ENCODE measurements at regions of chr2 and their contacts with region 1.

Region 1: GRCh38 chr2:219642465-219643080 is 15.1 kb downstream of the SLC4A3 start:
- DNase-seq: peak; percentile 92 to 94
- ATAC-seq: peak; percentile 84 to 86
- H3K4me3 ChIP-seq: no peak overlapping the region
- H3K27ac ChIP-seq: no peak overlapping the region
- H3K4me1 ChIP-seq: peaks cover 27 to 40% of the 10 kb centered on the region in 2 donors
- H3K27me3 ChIP-seq: no peaks in the 10 kb centered on the region
- CTCF ChIP-seq: peak; percentile 96 to 100 (median 99)
- POLR2A ChIP-seq: no peak

Region 2: DNA sequence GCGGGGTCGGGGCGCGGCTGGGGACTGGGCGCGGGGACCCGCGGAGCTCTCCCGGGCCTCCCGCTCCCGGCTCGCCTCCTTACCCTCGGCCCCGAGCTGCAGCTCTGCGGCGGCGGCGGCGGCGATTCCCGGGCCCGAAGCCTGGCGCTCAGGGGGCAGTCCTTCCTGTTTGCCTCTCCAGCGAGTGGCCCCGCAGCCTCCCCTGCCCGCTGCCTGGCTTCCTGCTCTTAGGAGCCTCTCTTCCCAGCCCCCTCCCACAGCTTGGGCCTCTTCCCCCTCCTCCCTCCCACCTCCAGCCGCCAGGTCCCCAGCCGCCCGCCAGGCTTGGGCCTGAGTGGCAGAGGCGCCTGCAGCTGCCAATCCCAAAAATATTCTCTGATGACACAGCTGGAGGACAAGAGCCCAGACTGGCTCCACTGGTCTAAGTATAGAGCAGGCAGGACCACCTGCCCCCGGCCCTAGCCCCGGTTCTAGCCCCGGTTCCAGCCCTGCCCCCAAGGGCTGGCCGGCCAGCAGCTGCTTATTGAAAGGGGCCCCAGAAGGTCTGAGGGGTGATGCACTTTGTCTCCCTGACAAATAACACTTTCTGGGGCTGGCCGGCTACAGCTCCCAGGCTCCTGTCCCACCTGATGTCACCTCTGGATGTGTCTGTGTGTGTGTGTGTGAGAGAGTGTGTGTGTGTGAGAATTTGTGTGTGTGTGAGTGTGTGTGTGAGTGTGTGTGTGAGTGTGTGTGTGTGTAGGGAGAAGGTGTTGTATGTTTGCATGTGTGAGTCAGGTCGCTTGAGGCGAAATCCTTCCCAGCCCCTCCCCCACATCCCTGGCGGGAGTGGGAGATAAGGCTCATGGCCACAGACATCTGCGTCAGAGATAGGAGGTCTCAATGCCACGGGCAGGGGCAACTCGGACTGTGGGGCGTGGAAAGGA is 71.0 kb before region 1 on chr2 and contains the start of gene OBSL1:
- in situ Hi-C with region 1: no loop called
- intact Hi-C with region 1: loop called (anchors 1 kb)
- DNase-seq: peak; percentile 69 to 89
- ATAC-seq: peak; percentile 80
- H3K4me3 ChIP-seq: peak within 1 kb of the TSS; percentile 56 to 73 (median 63)
- H3K27ac ChIP-seq: peak within 1 kb of the TSS; percentile 79 to 90 (median 86)
- H3K4me1 ChIP-seq: peaks cover 11 to 14% of the 10 kb centered on the region in 2 donors
- H3K27me3 ChIP-seq: no peaks in the 10 kb centered on the region
- CTCF ChIP-seq: no peak
- POLR2A ChIP-seq: peak; percentile 24 to 70
- total RNA-seq, gene OBSL1: 47.9 to 72.9 (median 56.5) TPM

Region 3: DNA sequence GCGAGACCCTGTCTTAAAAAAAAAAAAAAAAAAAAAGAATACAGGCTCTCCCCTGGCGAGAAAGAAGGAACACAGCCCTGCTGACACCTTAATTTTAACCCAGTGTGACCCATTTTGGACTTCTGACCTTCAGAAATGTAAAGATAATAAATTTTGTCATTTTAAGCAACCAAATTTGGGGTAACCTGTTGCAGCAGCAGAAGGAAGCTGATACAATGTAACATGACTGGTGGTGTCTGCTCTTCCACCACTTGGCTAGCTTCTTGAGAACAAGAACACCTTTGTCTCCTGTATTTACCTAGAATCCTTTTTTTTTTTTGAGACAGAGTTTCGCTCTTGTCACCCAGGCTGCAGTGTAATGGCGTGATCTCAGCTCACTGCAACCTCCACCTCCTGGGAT is 51.5 kb before region 1 on chr2:
- in situ Hi-C with region 1: no loop called
- intact Hi-C with region 1: no loop called
- DNase-seq: no peak
- ATAC-seq: no peak
- H3K4me3 ChIP-seq: no peak overlapping the region
- H3K27ac ChIP-seq: no peak overlapping the region
- H3K4me1 ChIP-seq: no peaks in the 10 kb centered on the region
- H3K27me3 ChIP-seq: no peaks in the 10 kb centered on the region
- CTCF ChIP-seq: no peak
- POLR2A ChIP-seq: no peak

Region 4: DNA sequence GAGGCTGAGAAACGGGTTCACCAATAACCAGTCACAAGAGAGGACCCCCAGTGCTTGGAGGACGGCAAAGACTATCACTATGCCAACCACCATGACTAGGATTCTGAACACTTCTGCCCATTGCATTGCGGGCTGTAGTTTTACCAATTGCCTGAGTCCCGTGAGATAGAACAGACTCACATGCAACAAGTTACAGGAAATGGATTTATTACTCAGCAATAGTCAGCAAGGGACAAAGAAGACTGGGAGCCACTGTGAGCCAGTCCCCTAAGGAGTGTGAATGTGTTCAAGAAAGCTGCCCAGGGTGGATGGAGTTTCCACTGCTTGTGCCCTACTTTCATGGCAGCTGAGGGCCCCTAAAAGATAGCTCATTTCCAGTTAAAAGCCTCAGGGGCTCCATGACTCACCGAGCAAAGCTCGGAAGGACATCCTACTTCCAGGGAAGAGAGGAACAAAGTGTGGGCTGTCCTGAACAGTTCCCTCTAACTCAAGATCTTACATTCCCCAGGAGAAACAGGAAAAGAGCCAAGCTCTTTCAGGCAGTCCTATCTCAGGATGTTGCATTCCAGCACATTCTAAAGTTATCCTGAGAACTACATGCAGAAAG is 39.2 kb after region 1 on chr2:
- in situ Hi-C with region 1: no loop called
- intact Hi-C with region 1: no loop called
- DNase-seq: no peak
- ATAC-seq: no peak
- H3K4me3 ChIP-seq: no peak overlapping the region
- H3K27ac ChIP-seq: no peak overlapping the region
- H3K4me1 ChIP-seq: peaks cover 0 to 5% of the 10 kb centered on the region in 2 donors
- H3K27me3 ChIP-seq: no peaks in the 10 kb centered on the region
- CTCF ChIP-seq: no peak
- POLR2A ChIP-seq: no peak